Activated CD8-positive, alpha-beta T cell treated with anti-CD3 and anti-CD28 coated beads, Interleukin-2, amount 10 ng/mL, durations not matched to agents 7 days and 5 days (primary cell): ENCODE measurements at regions of chr1 and their contacts with region 1.

Region 1: GRCh38 chr1:21270086-21270689 is 20.1 kb downstream of the ECE1 start:
- DNase-seq: peak; percentile 85
- ATAC-seq: peak; percentile 89
- H3K4me3 Mint-ChIP-seq: no peak overlapping the region
- H3K27ac Mint-ChIP-seq: no peak overlapping the region
- H3K4me1 Mint-ChIP-seq: peaks cover 14% of the 10 kb centered on the region
- H3K27me3 Mint-ChIP-seq: no peaks in the 10 kb centered on the region

Region 2: GRCh38 chr1:21216835-21217811 is 53.1 kb before region 1 on chr1:
- CTCF ChIA-PET with region 1: interaction called, 12 read pairs
- POLR2A ChIA-PET with region 1: no interaction called
- DNase-seq: peak; percentile 81
- ATAC-seq: peak; percentile 64
- H3K4me3 Mint-ChIP-seq: no peak overlapping the region
- H3K27ac Mint-ChIP-seq: no peak overlapping the region
- H3K4me1 Mint-ChIP-seq: no peaks in the 10 kb centered on the region
- H3K27me3 Mint-ChIP-seq: no peaks in the 10 kb centered on the region

Region 3: DNA sequence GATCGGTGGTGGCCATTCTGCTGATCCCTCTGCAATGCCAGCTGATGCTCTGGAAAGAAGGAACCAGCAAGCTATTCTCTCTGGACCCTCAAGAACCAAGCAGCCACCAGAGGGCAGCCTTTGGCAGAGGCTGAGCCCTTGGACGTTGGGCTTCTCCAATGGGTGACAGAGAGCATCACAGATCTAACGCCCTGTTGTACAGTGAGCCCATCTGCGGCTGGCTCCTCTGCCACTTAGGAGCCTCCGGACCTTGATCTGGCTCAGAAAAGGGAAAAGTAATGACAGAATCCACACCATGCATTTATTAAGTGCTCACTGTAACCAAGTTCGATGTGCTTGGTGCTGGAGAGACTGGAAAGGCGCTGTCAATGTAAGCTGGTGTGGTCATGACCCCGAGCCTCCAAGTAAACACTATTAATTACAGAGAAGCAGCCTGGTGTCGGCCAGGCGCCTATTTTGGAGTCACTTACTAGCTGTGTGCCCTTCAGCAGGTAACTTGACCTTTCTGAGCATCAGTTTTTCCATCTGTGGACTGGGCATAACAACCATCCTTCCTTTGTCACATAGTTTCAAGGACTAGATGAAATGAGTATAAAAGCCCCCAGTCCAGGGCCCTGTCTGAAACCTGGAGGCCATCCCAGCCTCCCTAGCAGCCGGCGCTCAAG is 14.8 kb before region 1 on chr1:
- CTCF ChIA-PET with region 1: interaction called, 162 read pairs
- POLR2A ChIA-PET with region 1: no interaction called
- DNase-seq: peak; percentile 87
- ATAC-seq: peak; percentile 79
- H3K4me3 Mint-ChIP-seq: no peak overlapping the region
- H3K27ac Mint-ChIP-seq: no peak overlapping the region
- H3K4me1 Mint-ChIP-seq: peaks cover 36% of the 10 kb centered on the region
- H3K27me3 Mint-ChIP-seq: no peaks in the 10 kb centered on the region

Region 4: GRCh38 chr1:21313203-21313885 is 43.2 kb after region 1 on chr1:
- CTCF ChIA-PET with region 1: interaction called, 23 read pairs
- POLR2A ChIA-PET with region 1: no interaction called
- DNase-seq: no peak
- ATAC-seq: no peak
- H3K4me3 Mint-ChIP-seq: no peak overlapping the region
- H3K27ac Mint-ChIP-seq: no peak overlapping the region
- H3K4me1 Mint-ChIP-seq: peaks cover 24% of the 10 kb centered on the region
- H3K27me3 Mint-ChIP-seq: no peaks in the 10 kb centered on the region

Region 5: GRCh38 chr1:21334214-21335087 is 64.3 kb after region 1 on chr1:
- CTCF ChIA-PET with region 1: interaction called, 26 read pairs
- POLR2A ChIA-PET with region 1: no interaction called
- DNase-seq: peak; percentile 92
- ATAC-seq: peak; percentile 92
- H3K4me3 Mint-ChIP-seq: peak overlapping the region; percentile 75
- H3K27ac Mint-ChIP-seq: peak overlapping the region; percentile 89
- H3K4me1 Mint-ChIP-seq: peaks cover 86% of the 10 kb centered on the region
- H3K27me3 Mint-ChIP-seq: no peaks in the 10 kb centered on the region

Region 6: DNA sequence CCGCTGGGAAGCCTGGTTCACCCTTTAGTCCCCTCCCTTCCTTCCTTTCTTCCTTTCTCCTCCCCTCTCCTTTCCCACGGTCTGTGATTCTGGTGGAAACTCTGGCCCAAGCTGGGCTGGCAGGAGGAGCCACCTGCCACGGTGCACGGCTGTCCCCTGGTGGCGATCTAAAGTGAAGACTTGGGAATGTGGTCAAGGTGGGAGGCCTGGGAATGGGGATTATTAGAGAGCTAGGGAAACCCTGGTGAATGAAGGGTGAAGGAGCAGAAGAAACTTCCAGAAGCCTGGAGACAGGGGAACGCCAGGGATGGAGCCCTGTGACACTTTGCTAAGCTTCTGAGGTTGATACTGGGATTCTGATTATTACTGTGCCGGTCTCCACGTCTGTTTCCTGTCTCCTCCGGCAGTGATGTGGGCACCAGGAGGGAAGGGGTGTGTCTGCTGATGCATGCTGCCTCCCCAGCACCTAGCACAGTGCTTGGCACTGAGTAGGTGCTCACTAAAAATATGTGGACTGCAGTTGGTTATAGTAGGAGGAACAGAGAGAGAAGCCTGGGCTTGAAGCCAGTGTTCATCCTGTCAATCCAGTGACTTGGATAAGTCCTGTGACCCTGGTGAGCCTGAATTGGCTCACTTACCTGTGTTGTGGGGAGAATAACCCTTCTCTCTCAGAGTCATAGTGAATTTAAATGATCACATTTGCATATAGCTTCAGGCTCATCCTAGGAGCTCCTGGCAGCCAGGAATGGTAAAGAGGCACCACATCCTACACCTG is 98.5 kb after region 1 on chr1:
- CTCF ChIA-PET with region 1: interaction called, 46 read pairs
- POLR2A ChIA-PET with region 1: no interaction called
- DNase-seq: peak; percentile 60
- ATAC-seq: peak; percentile 80
- H3K4me3 Mint-ChIP-seq: no peak overlapping the region
- H3K27ac Mint-ChIP-seq: no peak overlapping the region
- H3K4me1 Mint-ChIP-seq: peaks cover 9% of the 10 kb centered on the region
- H3K27me3 Mint-ChIP-seq: no peaks in the 10 kb centered on the region